Naive thymus-derived CD8-positive, alpha-beta T cell (primary cell): ENCODE measurements at regions of chr2 and their contacts with region 1.

Region 1: GRCh38 chr2:27380626-27381545 is at the start of gene ZNF513:
- DNase-seq: peak; percentile 74 to 91 (median 82)
- ATAC-seq: peak; percentile 93 to 95
- H3K4me3 Mint-ChIP-seq: peak within 1 kb of the TSS; percentile 84 to 95 (median 90)
- H3K27ac Mint-ChIP-seq: peak within 1 kb of the TSS; percentile 85 to 97 (median 94)
- H3K4me1 Mint-ChIP-seq: peaks cover 19 to 48% (median 29%) of the 10 kb centered on the region in 4 donors
- H3K27me3 Mint-ChIP-seq: no peaks in the 10 kb centered on the region
- polyA plus RNA-seq, gene ZNF513: 2.0 to 6.0 (median 2.5) TPM

Region 2: DNA sequence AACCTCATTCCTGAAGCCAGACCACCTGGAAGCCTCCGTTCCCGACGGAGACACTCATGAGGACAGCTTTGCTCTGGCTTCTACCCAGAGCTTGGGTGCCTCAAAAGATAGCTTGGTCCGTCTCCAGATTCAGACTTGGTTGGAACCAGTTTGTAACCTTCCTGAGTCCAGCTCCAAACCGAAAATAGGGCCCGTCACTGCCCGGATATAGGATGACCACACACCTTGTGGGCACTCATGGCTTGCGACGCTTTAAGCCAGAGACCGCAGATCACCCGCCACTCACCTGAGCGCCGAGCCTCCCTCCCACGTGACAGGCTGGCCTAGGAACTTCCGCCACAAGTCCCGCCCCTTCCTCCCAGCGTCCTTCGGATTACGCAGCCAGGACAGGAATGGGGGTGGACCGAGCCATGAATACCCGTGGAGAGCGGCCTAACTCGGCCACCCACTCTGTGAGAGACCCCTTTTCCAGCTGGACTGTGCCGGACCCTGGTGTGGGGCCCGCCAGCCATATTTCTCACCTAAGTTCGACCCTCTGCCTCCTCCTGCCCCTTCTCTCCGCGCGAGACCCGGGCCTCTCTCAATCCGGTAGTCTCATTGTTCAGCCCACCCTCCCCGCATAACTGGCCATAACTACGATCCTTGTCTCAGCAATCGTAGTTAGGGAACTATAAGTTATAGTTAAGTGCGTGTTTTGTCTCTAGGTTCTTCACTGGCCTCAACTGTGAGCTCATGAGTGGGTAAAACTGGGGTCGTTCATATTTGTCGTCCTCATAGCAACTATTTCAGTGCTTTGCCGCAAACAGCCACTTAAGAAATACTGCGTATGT is 57.9 kb before region 1 on chr2 and contains the start of gene MPV17:
- POLR2A ChIA-PET with region 1: interaction called, 14 read pairs
- DNase-seq: peak; percentile 70 to 94 (median 81)
- ATAC-seq: peak; percentile 95 to 97
- H3K4me3 Mint-ChIP-seq: peak within 1 kb of the TSS; percentile 91 to 100 (median 98)
- H3K27ac Mint-ChIP-seq: peak within 1 kb of the TSS; percentile 97 to 100 (median 99)
- H3K4me1 Mint-ChIP-seq: peaks cover 12 to 32% (median 31%) of the 10 kb centered on the region in 4 donors
- H3K27me3 Mint-ChIP-seq: no peaks in the 10 kb centered on the region
- polyA plus RNA-seq, gene MPV17: 110 to 135 (median 124) TPM

Region 3: GRCh38 chr2:27356382-27357181 is 24.3 kb before region 1 on chr2 and contains the start of gene GTF3C2:
- POLR2A ChIA-PET with region 1: interaction called, 28 read pairs
- DNase-seq: peak; percentile 76 to 98 (median 90)
- ATAC-seq: peak; percentile 82
- H3K4me3 Mint-ChIP-seq: peak within 1 kb of the TSS; percentile 96 to 100 (median 98)
- H3K27ac Mint-ChIP-seq: peak within 1 kb of the TSS; percentile 97 to 100 (median 99)
- H3K4me1 Mint-ChIP-seq: peaks cover 19 to 63% (median 52%) of the 10 kb centered on the region in 4 donors
- H3K27me3 Mint-ChIP-seq: no peaks in the 10 kb centered on the region
- polyA plus RNA-seq, gene GTF3C2: 26.2 to 46.1 (median 31.3) TPM

Region 4: GRCh38 chr2:27370026-27370815 is 10.7 kb before region 1 on chr2 and contains the starts of genes EIF2B4 and SNX17:
- POLR2A ChIA-PET with region 1: interaction called, 71 read pairs
- DNase-seq: peak; percentile 96 to 99 (median 99)
- ATAC-seq: peak; percentile 91 to 93
- H3K4me3 Mint-ChIP-seq: peak within 1 kb of the TSS; percentile 84 to 100 (median 96)
- H3K27ac Mint-ChIP-seq: peak within 1 kb of the TSS; percentile 92 to 99 (median 97)
- H3K4me1 Mint-ChIP-seq: peaks cover 26 to 43% (median 42%) of the 10 kb centered on the region in 4 donors
- H3K27me3 Mint-ChIP-seq: no peaks in the 10 kb centered on the region
- polyA plus RNA-seq, gene EIF2B4: 26.4 to 41.2 (median 30.0) TPM
- polyA plus RNA-seq, gene SNX17: 200 to 217 (median 215) TPM

Region 5: GRCh38 chr2:27409321-27410073 is 28.6 kb after region 1 on chr2 and contains the start of gene PPM1G:
- POLR2A ChIA-PET with region 1: interaction called, 27 read pairs
- DNase-seq: peak; percentile 92 to 97 (median 95)
- ATAC-seq: peak; percentile 94 to 96
- H3K4me3 Mint-ChIP-seq: peak within 1 kb of the TSS; percentile 87 to 95 (median 93)
- H3K27ac Mint-ChIP-seq: peak within 1 kb of the TSS; percentile 83 to 98 (median 96)
- H3K4me1 Mint-ChIP-seq: peaks cover 19 to 43% (median 35%) of the 10 kb centered on the region in 4 donors
- H3K27me3 Mint-ChIP-seq: peaks cover 0 to 5% (median 2%) of the 10 kb centered on the region in 5 donors
- polyA plus RNA-seq, gene PPM1G: 57.1 to 85.2 (median 66.1) TPM

Region 6: GRCh38 chr2:27428213-27428977 is 47.5 kb after region 1 on chr2 and contains the start of gene NRBP1:
- POLR2A ChIA-PET with region 1: interaction called, 13 read pairs
- DNase-seq: peak; percentile 81 to 93 (median 90)
- ATAC-seq: peak; percentile 92 to 94
- H3K4me3 Mint-ChIP-seq: peak within 1 kb of the TSS; percentile 95 to 100 (median 98)
- H3K27ac Mint-ChIP-seq: peak within 1 kb of the TSS; percentile 94 to 99 (median 98)
- H3K4me1 Mint-ChIP-seq: peaks cover 22 to 45% (median 43%) of the 10 kb centered on the region in 4 donors
- H3K27me3 Mint-ChIP-seq: no peaks in the 10 kb centered on the region
- polyA plus RNA-seq, gene NRBP1: 73.4 to 107 (median 78.8) TPM

Region 7: DNA sequence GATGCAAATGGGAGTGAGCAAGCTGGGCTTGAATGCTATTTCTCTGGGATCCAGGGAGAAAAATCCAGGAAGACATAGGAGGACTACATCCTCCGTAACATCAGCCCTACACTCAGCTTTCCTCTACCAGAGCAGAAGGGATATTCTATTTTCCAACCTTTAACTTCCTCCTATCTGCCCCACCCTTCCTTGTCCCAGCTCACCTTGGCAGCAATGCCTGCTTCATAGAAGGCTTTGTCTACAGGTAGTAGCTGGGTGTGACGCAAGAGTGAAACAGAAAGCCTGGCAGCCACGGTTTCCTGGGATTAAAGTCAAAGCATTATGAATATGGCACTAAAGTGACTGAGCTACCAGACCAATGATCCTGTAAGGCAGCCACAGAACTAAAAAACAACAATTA is 65.2 kb after region 1 on chr2:
- POLR2A ChIA-PET with region 1: no interaction called
- DNase-seq: no peak
- ATAC-seq: peak in 1 of 2 donors; percentile 29
- H3K4me3 Mint-ChIP-seq: no peak overlapping the region
- H3K27ac Mint-ChIP-seq: peak overlapping the region in 4 of 10 donors; percentile 35 to 79 (median 48)
- H3K4me1 Mint-ChIP-seq: peaks cover 0 to 7% (median 4%) of the 10 kb centered on the region in 4 donors
- H3K27me3 Mint-ChIP-seq: no peaks in the 10 kb centered on the region

Region 8: DNA sequence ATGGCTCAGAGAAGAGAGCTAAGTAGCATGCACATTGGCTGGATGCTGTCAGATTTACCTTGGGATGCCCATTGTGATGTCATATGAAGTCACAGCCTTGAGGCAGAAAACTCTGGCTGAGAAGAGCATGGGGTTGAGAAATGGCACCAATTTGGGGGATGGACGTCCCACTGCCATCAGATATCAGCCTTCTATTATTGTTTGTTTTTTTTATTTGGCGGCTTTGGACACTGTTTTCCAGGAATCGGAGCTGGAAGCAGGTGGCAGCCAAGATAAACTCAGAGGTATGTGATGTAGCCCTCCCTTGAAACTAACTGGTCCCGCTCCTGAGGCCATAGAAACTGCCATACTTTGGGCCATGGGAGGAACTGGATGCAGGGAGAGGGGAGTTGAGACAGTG is 156.4 kb after region 1 on chr2:
- POLR2A ChIA-PET with region 1: no interaction called
- DNase-seq: no peak
- ATAC-seq: no peak
- H3K4me3 Mint-ChIP-seq: no peak overlapping the region
- H3K27ac Mint-ChIP-seq: peak overlapping the region in 1 of 10 donors; percentile 39
- H3K4me1 Mint-ChIP-seq: no peaks in the 10 kb centered on the region
- H3K27me3 Mint-ChIP-seq: peaks cover 1 to 12% (median 8%) of the 10 kb centered on the region in 5 donors